Head of caudate nucleus (tissue), 42 donors: ENCODE measurements at regions of chr14 and their contacts with region 1.

Region 1: GRCh38 chr14:67571272-67571850 is 28.7 kb downstream of the PIGH start:
- DNase-seq: peak; percentile 46 to 91 (median 76)

Region 2: DNA sequence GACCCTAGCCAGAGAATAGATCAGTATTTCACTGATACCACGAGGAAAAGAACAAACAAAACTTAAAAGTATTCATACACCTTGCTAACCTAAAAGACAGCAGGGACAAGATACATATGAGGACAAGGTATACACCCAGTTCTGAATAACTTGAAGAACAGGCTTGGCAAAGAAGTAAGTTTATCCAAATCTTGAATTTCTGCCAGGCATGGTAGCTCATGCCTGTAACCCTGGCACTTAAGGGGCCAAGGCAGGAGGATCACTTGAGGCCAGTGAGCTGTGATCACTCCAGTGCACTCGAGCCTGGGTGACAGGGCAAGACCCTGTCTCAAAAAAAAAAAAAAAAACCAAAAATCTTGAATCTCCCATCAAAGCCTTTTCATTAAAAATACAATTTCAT is 186.3 kb before region 1 on chr14:
- intact Hi-C with region 1: no loop called
- DNase-seq: no peak

Region 3: GRCh38 chr14:67426983-67427606 is 144.3 kb before region 1 on chr14:
- intact Hi-C with region 1: loop called (anchors 5 kb)
- DNase-seq: peak; percentile 60 to 91 (median 80)

Region 4: GRCh38 chr14:67526676-67527459 is 44.5 kb before region 1 on chr14:
- intact Hi-C with region 1: loop called (anchors 2 kb)
- DNase-seq: peak in 39 of 42 donors; percentile 41 to 89 (median 68)

Region 5: GRCh38 chr14:67837011-67837624 is 265.8 kb after region 1 on chr14:
- intact Hi-C with region 1: no loop called
- DNase-seq: peak in 10 of 42 donors; percentile 18 to 49 (median 29)